Activated CD4-positive, alpha-beta T cell treated with anti-CD3 and anti-CD28 coated beads, Interleukin-2, amount 10 ng/mL, durations not matched to agents 24 days and 14 days (primary cell): ENCODE measurements at regions of chr19 and their contacts with region 1.

Region 1: DNA sequence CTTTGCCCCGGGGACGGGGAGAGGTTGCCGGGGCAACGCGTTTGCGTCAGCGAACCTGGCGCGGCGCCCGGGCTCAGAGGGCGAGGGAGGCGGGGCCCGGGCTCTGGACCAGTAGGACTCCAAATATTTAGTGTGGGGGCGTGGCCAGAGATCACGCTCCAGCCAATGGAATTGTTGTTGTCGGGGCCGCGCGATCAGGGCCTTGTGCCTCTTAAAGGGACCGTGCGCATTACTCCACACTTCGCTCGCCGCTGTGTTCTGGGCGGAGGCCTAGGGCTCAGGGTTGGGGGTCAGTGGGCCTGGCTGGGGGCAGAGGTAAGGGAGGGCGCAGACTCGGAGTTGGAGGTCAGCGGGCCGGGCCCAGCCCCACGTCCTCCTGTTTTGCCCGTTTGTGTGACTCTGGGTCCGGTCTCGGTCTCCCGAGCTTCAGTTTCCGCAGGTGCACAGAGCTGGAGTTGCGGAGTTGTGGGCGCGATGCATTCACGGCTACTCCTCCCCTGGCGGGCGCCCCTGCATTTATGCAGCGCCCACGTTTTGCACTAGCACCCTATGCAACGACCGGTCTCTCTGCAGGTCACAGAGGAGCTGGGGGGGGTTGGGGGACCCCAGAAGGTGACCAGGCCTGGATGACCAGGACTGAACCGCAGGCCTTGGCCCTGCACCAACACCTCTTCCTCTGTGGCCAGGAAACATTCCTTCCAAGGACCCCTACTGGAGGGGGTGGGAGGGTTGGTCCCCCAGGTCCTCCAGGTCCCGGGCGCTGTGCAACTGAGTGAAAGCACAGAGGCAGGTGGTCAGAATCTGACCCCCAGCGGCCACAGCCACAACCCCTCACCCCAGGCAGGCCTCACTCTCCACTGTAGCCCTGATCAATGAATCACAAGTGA is 10.7 kb upstream of the MKNK2 start:
- DNase-seq: peak; percentile 100
- H3K4me3 Mint-ChIP-seq: peak overlapping the region; percentile 90
- H3K27ac Mint-ChIP-seq: peak overlapping the region; percentile 91
- H3K4me1 Mint-ChIP-seq: peaks cover 20% of the 10 kb centered on the region
- H3K27me3 Mint-ChIP-seq: no peaks in the 10 kb centered on the region

Region 2: DNA sequence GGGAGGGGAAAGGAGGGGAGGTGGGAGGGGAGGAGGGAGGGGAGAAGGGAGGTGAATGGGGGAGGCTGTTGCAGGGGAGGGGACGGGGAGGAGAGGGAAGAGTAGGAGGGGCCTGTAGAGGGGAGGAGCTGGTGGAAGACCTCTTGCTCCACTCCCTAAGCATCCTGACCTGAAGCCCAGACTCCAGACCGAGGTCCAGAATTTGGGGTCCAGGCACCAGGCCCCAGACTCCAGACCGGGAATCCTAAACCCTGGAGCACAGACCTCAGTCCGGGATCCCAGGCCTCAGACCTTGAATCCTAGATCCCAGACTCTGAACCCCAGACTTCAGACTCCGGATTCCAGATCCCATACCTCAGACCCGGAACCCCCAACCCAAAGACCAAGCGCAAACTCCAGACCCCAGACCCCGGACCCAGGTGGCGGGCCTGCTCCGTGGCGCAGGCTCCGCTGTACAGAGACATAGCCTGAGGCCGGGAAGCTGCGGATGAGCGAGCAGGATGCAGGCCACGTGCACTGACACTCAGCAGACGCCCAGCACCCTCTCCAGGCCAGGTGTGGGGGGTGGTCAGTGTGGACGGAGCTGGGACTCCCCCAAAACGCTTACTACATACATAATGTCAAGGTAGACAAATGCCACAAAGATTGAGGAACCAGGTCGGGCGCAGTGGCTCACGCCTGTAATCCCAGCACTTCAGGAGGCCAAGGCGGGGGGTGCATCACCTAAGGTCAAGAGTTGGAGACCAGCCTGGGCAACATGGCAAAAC is 45.5 kb before region 1 on chr19:
- intact Hi-C with region 1: loop called (anchors 2 kb)
- DNase-seq: peak; percentile 88
- H3K4me3 Mint-ChIP-seq: peak overlapping the region; percentile 82
- H3K27ac Mint-ChIP-seq: peak overlapping the region; percentile 35
- H3K4me1 Mint-ChIP-seq: peaks cover 8% of the 10 kb centered on the region
- H3K27me3 Mint-ChIP-seq: no peaks in the 10 kb centered on the region

Region 3: DNA sequence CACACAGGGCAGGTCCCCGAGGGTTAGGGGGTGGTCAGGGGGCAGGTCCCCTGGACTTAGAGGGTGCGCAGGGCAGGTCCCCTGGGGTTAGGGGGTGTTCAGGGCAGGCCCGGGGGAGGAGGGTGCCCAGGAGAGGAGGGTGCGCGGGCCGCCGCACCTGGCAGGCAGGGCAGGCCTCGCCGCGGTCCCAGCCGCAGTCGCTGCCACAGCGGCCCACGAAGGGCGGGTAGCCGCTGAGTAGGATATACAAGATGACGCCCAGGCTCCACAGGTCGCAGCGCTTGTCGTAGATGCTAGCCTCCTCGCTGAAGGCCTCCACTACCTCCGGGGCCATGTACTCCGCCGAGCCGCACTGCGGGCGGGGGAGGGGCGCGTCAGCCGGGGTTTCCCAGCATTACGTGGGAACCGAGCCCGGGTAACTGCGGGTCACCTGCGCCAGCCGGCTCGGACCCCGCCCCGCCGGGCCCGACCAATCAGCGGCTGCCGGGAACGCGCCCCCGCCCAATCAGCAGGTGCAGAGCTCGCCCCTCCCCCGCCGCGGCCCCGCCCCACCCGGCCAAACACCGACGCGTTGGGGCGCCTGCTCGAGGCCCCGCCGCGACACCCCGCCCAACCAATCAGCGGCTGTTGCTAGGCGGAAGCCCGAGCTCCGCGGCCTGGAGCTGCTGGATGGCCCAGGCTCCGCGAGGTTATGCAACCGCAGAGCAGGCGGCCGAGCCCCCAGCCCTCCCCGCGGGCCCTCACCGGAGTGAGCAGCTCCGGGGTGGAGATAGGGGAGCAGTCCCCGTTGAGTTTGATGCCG is 19.9 kb before region 1 on chr19:
- intact Hi-C with region 1: loop called (anchors 1 kb)
- DNase-seq: peak; percentile 100
- H3K4me3 Mint-ChIP-seq: peak overlapping the region; percentile 82
- H3K27ac Mint-ChIP-seq: peak overlapping the region; percentile 94
- H3K4me1 Mint-ChIP-seq: peaks cover 14% of the 10 kb centered on the region
- H3K27me3 Mint-ChIP-seq: no peaks in the 10 kb centered on the region

Region 4: DNA sequence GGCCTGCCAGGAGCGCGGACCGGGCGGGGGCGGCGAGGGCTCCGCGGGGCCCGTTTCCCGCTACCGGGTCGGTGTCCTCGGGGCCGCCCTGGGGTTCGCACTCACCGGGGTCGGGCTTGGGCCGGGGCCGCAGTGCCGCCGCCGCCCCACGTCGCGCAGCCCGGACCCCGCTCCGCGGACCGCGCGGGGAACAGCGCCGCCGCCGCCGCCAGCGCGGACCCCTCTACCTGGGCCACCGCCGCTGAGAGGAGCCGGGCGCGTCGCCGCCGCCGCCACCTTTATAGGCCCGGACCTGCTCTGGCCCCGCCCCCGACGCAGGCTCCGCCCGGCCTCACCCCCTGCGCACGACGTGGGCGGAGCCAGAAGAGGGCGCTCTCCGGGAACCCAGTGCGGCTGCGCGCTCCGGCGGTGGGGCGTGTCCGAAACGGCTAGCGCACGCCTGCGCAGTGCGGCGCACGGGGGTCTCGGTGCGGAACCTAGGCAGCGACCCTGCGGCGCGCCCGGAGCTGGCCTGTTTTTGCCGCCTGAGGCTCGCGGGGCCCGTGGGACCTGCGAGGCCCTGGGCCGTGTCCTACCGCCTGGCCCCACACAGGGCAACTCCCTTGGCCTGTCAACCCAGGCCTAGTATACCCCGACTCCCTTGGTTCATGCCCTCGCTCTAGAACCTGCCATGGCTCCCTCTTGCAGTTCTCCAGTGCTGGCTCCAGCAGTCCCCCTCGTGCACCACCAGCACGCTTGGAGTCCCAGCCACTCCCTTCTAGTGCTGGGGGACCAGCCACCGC is 10.6 kb before region 1 on chr19 and contains the start of gene MKNK2:
- intact Hi-C with region 1: loop called (anchors 1 kb)
- DNase-seq: peak; percentile 99
- H3K4me3 Mint-ChIP-seq: peak within 1 kb of the TSS; percentile 90
- H3K27ac Mint-ChIP-seq: peak within 1 kb of the TSS; percentile 94
- H3K4me1 Mint-ChIP-seq: peaks cover 35% of the 10 kb centered on the region
- H3K27me3 Mint-ChIP-seq: no peaks in the 10 kb centered on the region
- total RNA-seq, gene MKNK2: 159 and 169 TPM in 2 replicates

Region 5: GRCh38 chr19:2096480-2097329 is 35.0 kb after region 1 on chr19 and contains the start of gene IZUMO4:
- intact Hi-C with region 1: loop called (anchors 1 kb)
- DNase-seq: peak; percentile 100
- H3K4me3 Mint-ChIP-seq: peak within 1 kb of the TSS; percentile 90
- H3K27ac Mint-ChIP-seq: peak within 1 kb of the TSS; percentile 94
- H3K4me1 Mint-ChIP-seq: peaks cover 25% of the 10 kb centered on the region
- H3K27me3 Mint-ChIP-seq: no peaks in the 10 kb centered on the region
- total RNA-seq, gene IZUMO4: 9.5 and 10.0 TPM in 2 replicates

Region 6: GRCh38 chr19:2113439-2114211 is 51.9 kb after region 1 on chr19:
- intact Hi-C with region 1: no loop called
- DNase-seq: no peak
- H3K4me3 Mint-ChIP-seq: no peak overlapping the region
- H3K27ac Mint-ChIP-seq: no peak overlapping the region
- H3K4me1 Mint-ChIP-seq: no peaks in the 10 kb centered on the region
- H3K27me3 Mint-ChIP-seq: no peaks in the 10 kb centered on the region